Dorsolateral prefrontal cortex (tissue), 120 donors: ENCODE measurements at regions of chr13 and their contacts with region 1.

Region 1: DNA sequence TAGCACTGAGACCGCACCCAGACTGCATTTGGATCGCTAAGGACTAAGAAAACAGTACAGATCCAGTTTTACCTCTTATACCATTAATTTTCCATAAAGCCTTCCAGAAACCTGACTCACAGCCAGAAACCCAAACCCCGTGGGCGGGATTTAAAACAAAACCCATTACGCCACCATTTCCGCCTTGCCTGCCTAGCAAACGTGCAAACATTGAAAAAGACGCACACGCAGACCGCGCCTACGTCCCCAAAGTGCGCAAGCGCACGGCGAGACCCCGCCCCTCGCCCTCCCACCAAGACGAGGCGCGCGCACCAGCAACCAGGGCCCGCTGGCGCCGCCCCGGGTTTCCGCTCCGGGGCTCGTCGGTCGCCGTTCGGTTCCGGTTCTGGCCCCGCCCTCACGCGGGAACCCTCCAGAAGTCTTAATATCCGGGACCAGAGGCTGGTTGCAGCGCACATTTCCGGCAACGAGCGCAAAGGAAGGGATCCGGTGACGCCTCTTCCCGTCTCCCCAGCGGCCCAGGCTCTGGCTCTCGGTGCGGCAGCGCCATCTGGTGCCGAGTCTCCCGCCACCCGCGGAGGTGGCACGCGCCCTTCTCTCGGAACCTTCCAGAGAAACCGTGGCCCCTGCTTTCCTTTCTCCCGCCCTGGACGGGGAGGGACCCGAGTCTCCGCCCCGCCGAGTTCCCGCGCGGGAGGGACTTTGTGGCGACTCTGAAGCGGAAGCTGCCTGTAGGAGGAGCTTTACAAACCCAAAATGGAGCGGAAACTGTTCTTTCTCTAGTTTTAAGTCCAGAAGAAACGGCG is 256.9 kb upstream of the STARD13 start:
- DNase-seq: peak; percentile 94 to 98 (median 96)
- H3K4me3 ChIP-seq: peak overlapping the region; percentile 41 to 80 (median 68)
- H3K27ac ChIP-seq: peak overlapping the region; percentile 96 to 100 (median 100)
- H3K27me3 ChIP-seq: no peaks in the 10 kb centered on the region
- CTCF ChIP-seq: peak; percentile 81 to 99 (median 96)

Region 2: DNA sequence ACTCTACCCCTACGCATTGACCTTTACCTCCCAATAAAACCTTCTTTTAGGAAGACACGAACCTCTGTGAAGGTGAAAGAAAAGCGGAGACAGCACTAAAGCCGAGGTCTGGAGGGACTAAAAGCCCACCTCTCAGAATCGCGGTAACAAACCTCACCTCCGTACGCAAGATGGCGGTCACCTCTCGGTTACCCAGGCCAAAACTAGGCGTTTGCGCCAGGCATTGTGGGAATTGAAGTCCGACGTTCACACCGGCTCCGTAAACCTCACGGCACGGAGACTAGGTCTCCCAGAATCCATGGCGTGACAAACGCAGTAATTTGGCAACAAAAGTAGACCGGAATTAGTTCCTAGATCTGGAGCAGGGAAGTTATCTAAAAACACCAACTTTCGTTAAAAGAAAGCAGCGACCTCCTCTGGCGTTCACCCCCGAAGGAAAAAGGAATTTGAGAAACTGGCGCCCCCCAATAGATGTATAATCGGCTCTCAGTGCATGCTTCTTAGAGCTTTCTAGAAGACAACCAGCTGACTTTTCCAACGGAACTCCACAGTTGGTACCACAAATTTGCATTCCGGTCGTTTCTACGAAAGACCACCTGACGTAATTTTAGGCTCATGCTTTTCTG is 1003.8 kb before region 1 on chr13 and contains the start of gene N4BP2L2:
- intact Hi-C with region 1: loop called in 1 of 2 experiments (anchors 5 kb)
- DNase-seq: peak; percentile 91 to 98 (median 94)
- H3K4me3 ChIP-seq: peak within 1 kb of the TSS; percentile 65 to 98 (median 90)
- H3K27ac ChIP-seq: peak within 1 kb of the TSS; percentile 51 to 97 (median 90)
- H3K27me3 ChIP-seq: no peaks in the 10 kb centered on the region
- CTCF ChIP-seq: peak; percentile 41 to 86 (median 70)
- total RNA-seq, gene N4BP2L2: 137 to 249 (median 191) TPM

Region 3: GRCh38 chr13:33072283-33072682 is 470.2 kb before region 1 on chr13:
- intact Hi-C with region 1: loop called in 1 of 2 experiments (anchors 10 kb)
- DNase-seq: peak in 3 of 10 donors; percentile 49 to 62 (median 57)
- H3K4me3 ChIP-seq: no peak overlapping the region
- H3K27ac ChIP-seq: peak overlapping the region in 48 of 59 donors; percentile 1 to 81 (median 56)
- H3K27me3 ChIP-seq: no peaks in the 10 kb centered on the region
- CTCF ChIP-seq: no peak

Region 4: GRCh38 chr13:33610471-33611015 is 68.1 kb after region 1 on chr13:
- intact Hi-C with region 1: loop called (anchors 5 kb)
- DNase-seq: peak; percentile 63 to 82 (median 77)
- H3K4me3 ChIP-seq: peak overlapping the region; percentile 9 to 64 (median 45)
- H3K27ac ChIP-seq: peak overlapping the region; percentile 78 to 99 (median 95)
- H3K27me3 ChIP-seq: no peaks in the 10 kb centered on the region
- CTCF ChIP-seq: peak in 20 of 56 donors; percentile 3 to 41 (median 18)

Region 5: DNA sequence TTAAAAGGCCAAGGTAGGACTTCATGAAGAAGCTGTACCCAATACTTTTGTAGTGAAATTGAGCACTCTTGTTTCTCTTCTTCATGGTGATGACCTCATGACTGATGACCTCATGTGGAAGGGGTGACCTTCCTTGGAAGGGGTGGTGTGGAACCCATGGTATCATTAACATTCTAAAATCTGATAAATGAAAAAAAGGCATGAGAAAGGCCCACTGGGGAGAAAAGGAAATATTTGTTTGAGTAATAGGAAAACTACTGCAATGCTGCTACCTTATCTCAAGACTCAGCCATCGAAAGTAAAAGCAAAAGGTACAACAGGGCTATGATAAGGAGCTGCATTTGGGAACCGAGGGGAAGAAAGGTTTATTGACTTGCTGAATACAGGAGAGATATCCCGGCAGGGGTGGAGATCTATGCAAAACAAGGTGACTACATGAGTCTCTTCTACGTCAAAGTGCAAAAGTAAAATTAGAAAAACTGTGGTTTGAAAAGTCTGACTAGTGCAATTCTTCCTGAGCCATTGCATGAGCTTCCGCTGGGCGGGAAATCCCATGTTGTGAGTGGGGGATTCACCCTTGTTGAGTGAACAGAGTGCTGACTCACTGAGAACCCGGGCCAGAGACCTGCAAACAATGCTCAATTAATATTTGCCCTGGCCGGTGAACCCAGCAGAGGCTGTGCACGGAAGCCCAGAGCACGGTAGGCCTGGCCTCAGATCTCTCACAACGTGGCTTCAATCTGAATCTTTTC is 136.6 kb after region 1 on chr13:
- intact Hi-C with region 1: loop called in 1 of 2 experiments (anchors 2 kb)
- DNase-seq: peak in 7 of 10 donors; percentile 25 to 83 (median 52)
- H3K4me3 ChIP-seq: peak overlapping the region in 7 of 59 donors; percentile 0 to 26 (median 15)
- H3K27ac ChIP-seq: peak overlapping the region in 26 of 59 donors; percentile 0 to 69 (median 38)
- H3K27me3 ChIP-seq: no peaks in the 10 kb centered on the region
- CTCF ChIP-seq: no peak